ENCODE measurements at regions of chr1 and their contacts with region 1.

Region 1: DNA sequence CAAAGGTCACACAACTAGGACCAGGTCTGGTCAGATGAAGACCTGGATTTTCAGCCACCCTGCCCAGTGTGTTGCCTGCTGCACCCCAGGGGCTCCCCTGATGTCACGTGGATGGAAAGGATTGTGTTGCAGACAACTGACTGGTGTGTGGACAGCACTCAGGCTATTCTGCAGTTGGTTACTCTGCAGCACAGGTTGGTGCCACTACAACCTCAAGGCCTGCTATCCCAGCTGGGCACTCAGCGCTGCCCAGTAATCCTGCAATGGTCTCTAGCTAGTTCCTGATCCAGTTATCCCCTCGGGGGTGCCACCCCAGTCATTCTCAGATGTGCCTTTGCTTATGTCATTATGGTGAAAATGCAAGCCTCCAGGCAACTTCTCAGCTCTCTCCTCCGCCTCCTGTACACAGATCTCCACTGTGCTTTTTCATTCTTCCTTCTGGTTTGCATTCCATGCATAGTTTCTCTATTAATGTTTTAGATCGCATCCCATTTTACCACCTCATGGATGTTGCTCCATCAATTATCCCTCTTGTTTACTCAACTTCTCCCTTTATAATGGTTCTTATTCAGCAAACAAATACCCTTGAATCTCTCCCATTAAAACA is 503.2 kb upstream of the CAMK1G start:
- DNase-seq: no peak
- H3K4me3 ChIP-seq: no peak overlapping the region
- H3K27ac ChIP-seq: no peak overlapping the region
- H3K4me1 ChIP-seq: no peaks in the 10 kb centered on the region
- H3K27me3 ChIP-seq: no peaks in the 10 kb centered on the region
- CTCF ChIP-seq: no peak
- POLR2A ChIP-seq: no peak

Region 2: GRCh38 chr1:208919371-208919770 is 160.9 kb before region 1 on chr1:
- intact Hi-C with region 1: no loop called
- DNase-seq: no peak
- H3K4me3 ChIP-seq: no peak overlapping the region
- H3K27ac ChIP-seq: no peak overlapping the region
- H3K4me1 ChIP-seq: no peaks in the 10 kb centered on the region
- H3K27me3 ChIP-seq: no peaks in the 10 kb centered on the region
- CTCF ChIP-seq: no peak
- POLR2A ChIP-seq: no peak

Region 3: GRCh38 chr1:209190591-209191261 is 110.5 kb after region 1 on chr1:
- intact Hi-C with region 1: loop called in 1 of 2 experiments (anchors 5 kb)
- DNase-seq: peak; percentile 35 to 79 (median 60)
- H3K4me3 ChIP-seq: no peak overlapping the region
- H3K27ac ChIP-seq: no peak overlapping the region
- H3K4me1 ChIP-seq: no peaks in the 10 kb centered on the region
- H3K27me3 ChIP-seq: no peaks in the 10 kb centered on the region
- CTCF ChIP-seq: peak; percentile 43 to 69 (median 65)
- POLR2A ChIP-seq: no peak